ENCODE measurements at regions of chr14 and their contacts with region 1.

Region 1: DNA sequence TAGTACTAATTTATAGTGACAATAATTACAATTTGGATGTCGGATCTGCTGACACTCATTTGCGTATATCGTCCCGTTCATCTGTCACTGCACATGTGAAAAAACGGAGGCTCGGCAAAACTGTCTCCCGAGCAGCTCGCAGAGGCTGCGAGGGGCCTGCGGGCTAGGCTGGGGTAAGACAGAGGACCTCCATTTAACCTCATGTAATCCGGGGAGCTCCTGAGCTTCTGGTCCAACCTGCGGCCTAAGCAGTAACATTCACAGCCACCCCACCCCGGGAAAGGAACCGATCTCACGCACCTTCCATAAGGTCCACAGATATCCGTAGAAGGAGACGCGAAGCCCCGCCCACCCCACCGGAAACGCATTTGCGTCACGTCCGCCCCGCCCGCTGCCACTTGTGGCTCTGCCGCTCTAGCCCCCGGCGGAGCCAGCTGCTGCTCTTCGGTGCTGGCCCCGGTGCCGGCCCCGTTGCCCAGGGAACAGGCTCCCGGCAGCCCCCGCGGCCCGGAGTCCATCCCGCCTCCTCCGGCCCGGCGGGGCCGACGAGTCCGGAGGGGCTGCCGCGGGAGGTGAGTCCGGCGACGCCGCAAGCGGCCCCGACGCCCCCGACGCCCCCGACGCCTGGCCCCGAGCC is at the starts of genes CINP and TECPR2:
- DNase-seq: peak; percentile 92
- H3K4me3 Mint-ChIP-seq: peak within 1 kb of the TSS; percentile 93
- H3K27ac Mint-ChIP-seq: peak within 1 kb of the TSS; percentile 91
- H3K4me1 Mint-ChIP-seq: peaks cover 32% of the 10 kb centered on the region
- H3K27me3 Mint-ChIP-seq: no peaks in the 10 kb centered on the region
- total RNA-seq, gene CINP: 39.6 and 42.5 TPM in 2 replicates
- total RNA-seq, gene TECPR2: 9.5 and 10.1 TPM in 2 replicates

Region 2: DNA sequence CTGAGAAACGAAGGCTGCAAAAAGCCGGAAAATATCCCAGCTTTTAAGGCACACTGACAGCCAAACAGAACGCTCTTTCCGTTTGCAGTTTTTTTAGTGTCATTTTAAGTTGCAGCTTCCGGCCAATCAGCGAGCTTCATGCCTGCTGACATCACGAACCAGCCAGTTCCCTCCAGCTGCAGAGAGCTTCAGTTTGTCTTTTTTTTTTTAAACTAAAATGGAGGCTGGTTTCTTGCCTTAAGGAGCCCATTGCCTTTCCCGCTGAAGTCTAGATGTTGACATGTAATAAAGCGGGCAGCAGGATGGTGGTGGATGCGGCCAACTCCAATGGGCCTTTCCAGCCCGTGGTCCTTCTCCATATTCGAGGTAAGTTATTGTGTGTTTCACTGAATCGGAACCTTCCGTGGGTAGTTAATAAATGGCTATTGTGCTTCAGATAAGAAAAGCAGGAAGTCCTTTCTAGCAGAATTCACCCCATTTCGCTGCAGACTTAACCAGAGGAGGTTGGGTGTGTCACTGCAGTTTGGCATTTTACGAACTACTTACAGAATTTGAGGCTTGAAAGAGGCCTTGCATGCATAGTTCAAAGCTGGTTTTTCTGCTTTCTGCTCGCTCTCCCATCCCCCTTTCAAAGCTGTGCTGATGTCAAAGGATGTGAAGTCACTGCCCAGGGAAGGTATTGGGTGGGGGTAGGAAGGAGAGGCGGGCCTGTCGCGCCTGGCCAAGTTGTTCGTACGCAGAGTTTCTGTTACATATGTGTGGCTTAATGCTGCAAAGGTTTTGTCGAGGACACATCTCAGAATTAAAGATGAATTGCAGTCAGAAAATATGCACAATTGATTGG is 552.8 kb before region 1 on chr14:
- intact Hi-C with region 1: loop called (anchors 5 kb)
- DNase-seq: peak; percentile 88
- H3K4me3 Mint-ChIP-seq: peak overlapping the region; percentile 96
- H3K27ac Mint-ChIP-seq: peak overlapping the region; percentile 100
- H3K4me1 Mint-ChIP-seq: peaks cover 52% of the 10 kb centered on the region
- H3K27me3 Mint-ChIP-seq: no peaks in the 10 kb centered on the region

Region 3: DNA sequence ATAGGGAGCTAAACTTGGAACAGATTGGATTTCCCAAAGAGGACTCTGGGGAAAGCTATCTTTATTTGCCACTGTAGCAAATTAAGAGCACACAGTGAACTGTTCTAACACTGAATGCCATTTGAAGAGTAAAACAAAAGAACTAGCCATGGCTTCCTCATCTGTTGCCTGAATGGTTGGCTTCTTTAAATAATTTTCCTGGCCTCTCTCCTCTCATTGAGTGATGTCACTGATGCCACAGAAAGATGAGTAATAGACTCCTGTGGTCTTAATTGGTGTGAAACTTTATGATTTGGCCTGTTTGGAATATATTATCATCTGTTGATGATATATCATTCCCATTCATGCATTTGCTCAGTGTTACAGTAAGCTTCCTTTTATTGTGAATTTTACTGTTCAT is 180.5 kb before region 1 on chr14:
- intact Hi-C with region 1: loop called (anchors 1 kb)
- DNase-seq: no peak
- H3K4me3 Mint-ChIP-seq: no peak overlapping the region
- H3K27ac Mint-ChIP-seq: peak overlapping the region; percentile 68
- H3K4me1 Mint-ChIP-seq: peaks cover 50% of the 10 kb centered on the region
- H3K27me3 Mint-ChIP-seq: no peaks in the 10 kb centered on the region

Region 4: GRCh38 chr14:102351026-102351425 is 11.6 kb before region 1 on chr14:
- intact Hi-C with region 1: no loop called
- DNase-seq: no peak
- H3K4me3 Mint-ChIP-seq: no peak overlapping the region
- H3K27ac Mint-ChIP-seq: no peak overlapping the region
- H3K4me1 Mint-ChIP-seq: no peaks in the 10 kb centered on the region
- H3K27me3 Mint-ChIP-seq: no peaks in the 10 kb centered on the region

Region 5: GRCh38 chr14:102516531-102517415 is 154.1 kb after region 1 on chr14:
- intact Hi-C with region 1: loop called (anchors 2 kb)
- DNase-seq: peak; percentile 59
- H3K4me3 Mint-ChIP-seq: peak overlapping the region; percentile 82
- H3K27ac Mint-ChIP-seq: peak overlapping the region; percentile 61
- H3K4me1 Mint-ChIP-seq: no peaks in the 10 kb centered on the region
- H3K27me3 Mint-ChIP-seq: peaks cover 9% of the 10 kb centered on the region

Measured in activated T-helper 1 cell treated with anti-CD3 and anti-CD28 coated beads, Interleukin-12 subunit alpha, Interleukin-12 subunit beta, Interleukin-2, Interleukin-4 antibody, amounts not matched to agents 30 ng/mL and 10 ng/mL and 1 ng/mL, durations not matched to agents 14 hours and 24 hours and 36 hours (primary cell).